ENCODE measurements at regions of chr12 and their contacts with region 1.

Region 1: DNA sequence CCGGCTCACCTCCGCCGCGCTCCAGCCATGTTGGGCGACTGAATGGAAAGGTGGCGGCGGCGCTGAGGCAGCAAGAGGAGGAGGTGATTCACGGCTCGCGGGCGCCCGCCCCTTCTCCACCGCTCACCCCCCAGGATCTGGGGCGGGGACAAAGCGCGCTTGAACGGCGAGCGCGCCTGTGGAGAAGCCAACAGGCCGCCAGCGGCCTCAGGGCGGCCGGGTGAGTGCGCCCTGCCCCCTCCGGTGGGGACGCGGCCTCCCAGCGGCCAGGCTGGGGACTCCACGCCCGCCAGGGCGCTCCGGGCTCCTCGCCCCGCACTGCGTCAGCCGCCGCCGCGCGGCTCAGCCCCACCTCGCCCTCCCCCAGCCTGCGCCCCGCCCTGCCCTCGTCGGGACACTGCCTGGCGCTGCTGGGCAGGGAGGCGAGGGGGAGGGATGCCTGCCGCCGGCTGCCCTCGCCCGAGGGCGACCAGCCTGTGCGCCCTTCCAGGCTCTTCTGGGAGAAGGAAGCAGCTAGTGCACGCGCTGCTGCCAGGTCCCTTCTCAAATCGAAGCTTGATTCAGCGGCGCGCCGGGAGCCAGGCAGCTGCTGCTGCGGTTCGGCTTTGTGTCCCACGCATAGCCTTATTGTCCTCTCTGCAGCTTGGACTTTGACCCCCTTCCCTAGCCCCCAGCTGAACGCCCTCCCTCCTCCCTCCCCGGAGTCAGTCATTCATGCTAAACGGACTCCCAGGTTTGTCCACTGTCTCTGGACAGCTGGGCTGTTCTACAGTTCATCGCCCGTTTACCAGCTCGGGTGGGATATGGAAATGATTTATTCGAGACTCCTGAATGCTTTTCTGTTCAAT is at the start of gene KIF21A:
- DNase-seq: peak; percentile 91
- ATAC-seq: peak; percentile 97
- total RNA-seq, gene KIF21A: 57.9 TPM

Region 2: DNA sequence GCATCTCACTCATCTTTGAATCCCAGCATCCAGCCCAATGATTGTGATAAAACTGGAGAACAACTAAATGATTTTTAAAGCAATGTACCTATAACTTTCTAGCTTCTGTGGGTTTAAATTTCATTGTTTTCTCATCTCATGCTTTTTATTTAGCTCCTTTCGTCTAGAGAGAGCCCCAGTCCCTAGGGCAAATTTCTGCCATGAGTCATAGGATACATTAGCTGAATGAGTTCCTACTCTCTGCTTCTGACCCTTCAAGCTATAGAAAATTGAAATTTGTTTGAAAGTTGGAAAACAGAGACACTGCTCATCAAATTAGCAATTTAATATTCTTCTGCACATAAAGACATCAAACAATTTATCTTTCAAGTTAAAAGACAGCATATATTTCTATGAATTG is 114.3 kb before region 1 on chr12:
- intact Hi-C with region 1: loop called (anchors 5 kb)
- DNase-seq: no peak
- ATAC-seq: no peak

Region 3: GRCh38 chr12:39389399-39390150 is 53.7 kb before region 1 on chr12:
- intact Hi-C with region 1: loop called (anchors 5 kb)
- DNase-seq: no peak
- ATAC-seq: no peak

Region 4: DNA sequence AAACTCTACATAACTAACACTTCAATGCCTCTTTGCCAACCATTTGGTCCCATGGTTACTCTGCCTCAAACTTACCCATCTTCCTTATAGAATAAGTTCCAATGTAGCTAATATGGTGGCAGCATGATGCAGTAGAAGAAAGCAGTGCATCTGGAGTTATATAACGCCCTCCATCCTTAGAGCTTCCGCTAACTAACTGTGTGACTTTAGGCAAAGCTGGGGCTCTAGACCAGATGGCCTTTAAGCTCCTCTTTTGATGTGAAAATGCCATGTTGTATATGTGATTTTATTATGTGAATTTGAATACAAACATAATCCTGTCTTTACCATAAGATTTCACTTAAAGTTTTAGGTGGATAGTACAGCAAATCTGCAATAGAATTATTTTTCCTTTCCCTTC is 170.2 kb after region 1 on chr12:
- intact Hi-C with region 1: loop called (anchors 2 kb)
- DNase-seq: no peak
- ATAC-seq: no peak